Esophagus muscularis mucosa (tissue), 4 donors: ENCODE measurements at regions of chr12 and their contacts with region 1.

Region 1: DNA sequence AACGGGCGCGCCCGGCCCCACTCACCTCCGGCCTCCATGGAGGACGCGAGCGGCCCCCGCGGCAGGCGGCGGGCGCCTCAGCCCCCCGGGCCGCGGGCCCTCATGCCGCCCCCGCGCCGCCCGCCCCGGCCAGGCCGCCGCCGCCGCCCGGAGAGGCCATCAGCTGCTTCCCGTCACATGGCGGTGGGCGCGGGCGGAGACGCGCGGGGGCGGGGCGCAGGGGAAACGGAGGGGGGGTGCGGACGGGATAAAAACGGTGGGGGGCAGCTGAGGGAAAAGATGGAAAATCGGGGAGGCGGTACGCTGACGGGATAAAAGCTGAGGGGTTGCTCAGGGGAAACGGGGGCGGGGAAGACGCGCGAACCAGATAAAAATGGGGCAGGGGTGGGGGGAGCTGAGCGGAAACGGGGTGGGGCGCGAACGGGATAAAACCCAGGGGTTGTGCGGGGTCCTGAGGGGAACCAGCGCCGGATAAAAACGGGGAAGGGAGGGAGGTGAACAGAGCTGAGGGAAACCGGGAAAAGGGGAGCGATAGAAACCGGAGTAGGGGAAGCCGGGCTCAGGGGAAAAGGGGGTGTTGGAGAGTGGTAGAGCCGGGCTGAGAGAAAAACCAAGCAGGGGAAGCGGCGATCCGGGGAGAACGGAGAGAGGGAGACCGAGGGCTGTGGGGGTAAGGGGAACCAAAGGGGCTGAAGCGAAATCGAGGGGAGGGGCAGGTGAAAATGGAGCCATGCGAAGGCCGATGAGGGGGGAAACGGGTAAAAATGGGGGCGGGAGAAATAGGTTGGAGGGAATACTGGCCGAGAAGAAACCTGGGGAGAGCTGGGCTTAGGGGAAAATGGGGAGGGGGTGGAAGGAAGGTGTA is at the start of gene WSB2:
- DNase-seq: peak; percentile 94
- H3K4me3 ChIP-seq: peak within 1 kb of the TSS; percentile 79 to 87 (median 82)
- H3K27ac ChIP-seq: peak within 1 kb of the TSS; percentile 96 to 97 (median 96)
- H3K4me1 ChIP-seq: peaks cover 22 to 60% (median 44%) of the 10 kb centered on the region in 4 donors
- H3K27me3 ChIP-seq: no peaks in the 10 kb centered on the region
- CTCF ChIP-seq: no peak
- EP300 ChIP-seq: no peak
- POLR2A ChIP-seq: no peak
- total RNA-seq, gene WSB2: 68.5 to 87.7 (median 81.7) TPM

Region 2: DNA sequence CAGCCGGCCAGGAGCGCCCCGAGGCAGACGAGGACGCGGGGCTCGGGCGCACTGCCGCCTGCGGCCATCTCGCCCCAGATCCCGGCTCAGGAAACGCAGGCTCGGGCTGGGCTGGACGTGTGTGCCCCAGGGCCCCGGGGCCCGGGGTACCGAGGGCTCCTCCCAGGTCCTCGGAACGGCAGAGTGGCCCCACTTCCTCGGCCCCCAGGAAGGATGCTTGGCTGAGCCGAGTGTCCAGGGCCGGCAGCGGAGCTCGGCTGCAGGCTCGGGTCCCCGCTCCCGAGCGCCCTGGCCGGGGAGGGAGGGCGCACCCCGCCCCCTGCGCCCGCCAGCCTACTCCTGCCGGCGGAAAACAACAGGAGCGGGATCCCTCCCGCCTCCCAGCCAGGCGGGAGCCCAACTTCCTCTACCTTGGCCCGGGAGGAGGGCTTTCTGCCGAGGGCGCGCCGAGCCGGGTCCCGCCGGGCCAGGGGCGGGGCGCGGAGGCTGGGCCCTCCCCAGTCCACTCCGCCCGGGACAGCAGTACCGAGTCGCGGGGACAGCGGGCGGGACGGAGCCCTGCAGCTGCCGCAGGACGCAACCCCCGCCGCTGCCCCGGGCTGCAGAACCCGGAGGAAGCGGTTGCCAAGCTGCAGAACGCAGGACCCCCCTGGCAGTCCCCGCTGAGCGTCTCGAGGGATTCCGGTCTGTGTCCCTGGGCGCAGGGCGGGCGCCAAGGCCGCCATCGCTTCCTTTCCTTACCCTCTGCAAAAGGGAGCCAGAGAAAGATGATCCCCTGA is 42.5 kb after region 1 on chr12 and contains the start of gene VSIG10:
- intact Hi-C with region 1: loop called (anchors 2 kb)
- DNase-seq: no peak
- H3K4me3 ChIP-seq: peak within 1 kb of the TSS; percentile 71 to 93 (median 85)
- H3K27ac ChIP-seq: peak within 1 kb of the TSS; percentile 78 to 87 (median 80)
- H3K4me1 ChIP-seq: peaks cover 11 to 23% (median 17%) of the 10 kb centered on the region in 4 donors
- H3K27me3 ChIP-seq: no peaks in the 10 kb centered on the region
- CTCF ChIP-seq: peak in 1 of 3 experiments; percentile 10
- EP300 ChIP-seq: no peak
- POLR2A ChIP-seq: no peak
- total RNA-seq, gene VSIG10: 14.1 to 71.7 (median 22.0) TPM

Region 3: GRCh38 chr12:118135788-118136558 is 74.7 kb after region 1 on chr12 and contains the start of gene PEBP1:
- intact Hi-C with region 1: loop called (anchors 5 kb)
- DNase-seq: peak; percentile 98
- H3K4me3 ChIP-seq: peak within 1 kb of the TSS; percentile 88 to 98 (median 91)
- H3K27ac ChIP-seq: peak within 1 kb of the TSS; percentile 86 to 95 (median 94)
- H3K4me1 ChIP-seq: peaks cover 19 to 56% (median 44%) of the 10 kb centered on the region in 4 donors
- H3K27me3 ChIP-seq: no peaks in the 10 kb centered on the region
- CTCF ChIP-seq: peak in 1 of 3 experiments; percentile 15
- EP300 ChIP-seq: no peak
- POLR2A ChIP-seq: peak; percentile 58
- total RNA-seq, gene PEBP1: 233 to 393 (median 327) TPM

Region 4: GRCh38 chr12:118429688-118430383 is 368.6 kb after region 1 on chr12:
- intact Hi-C with region 1: no loop called
- DNase-seq: no peak
- H3K4me3 ChIP-seq: no peak overlapping the region
- H3K27ac ChIP-seq: no peak overlapping the region
- H3K4me1 ChIP-seq: no peaks in the 10 kb centered on the region
- H3K27me3 ChIP-seq: no peaks in the 10 kb centered on the region
- CTCF ChIP-seq: no peak
- EP300 ChIP-seq: no peak
- POLR2A ChIP-seq: no peak

Region 5: GRCh38 chr12:118467641-118468305 is 406.5 kb after region 1 on chr12:
- intact Hi-C with region 1: no loop called
- DNase-seq: no peak
- H3K4me3 ChIP-seq: no peak overlapping the region
- H3K27ac ChIP-seq: no peak overlapping the region
- H3K4me1 ChIP-seq: no peaks in the 10 kb centered on the region
- H3K27me3 ChIP-seq: no peaks in the 10 kb centered on the region
- CTCF ChIP-seq: no peak
- EP300 ChIP-seq: no peak
- POLR2A ChIP-seq: no peak